ENCODE measurements at regions of chr9 and their contacts with region 1.

Region 1: DNA sequence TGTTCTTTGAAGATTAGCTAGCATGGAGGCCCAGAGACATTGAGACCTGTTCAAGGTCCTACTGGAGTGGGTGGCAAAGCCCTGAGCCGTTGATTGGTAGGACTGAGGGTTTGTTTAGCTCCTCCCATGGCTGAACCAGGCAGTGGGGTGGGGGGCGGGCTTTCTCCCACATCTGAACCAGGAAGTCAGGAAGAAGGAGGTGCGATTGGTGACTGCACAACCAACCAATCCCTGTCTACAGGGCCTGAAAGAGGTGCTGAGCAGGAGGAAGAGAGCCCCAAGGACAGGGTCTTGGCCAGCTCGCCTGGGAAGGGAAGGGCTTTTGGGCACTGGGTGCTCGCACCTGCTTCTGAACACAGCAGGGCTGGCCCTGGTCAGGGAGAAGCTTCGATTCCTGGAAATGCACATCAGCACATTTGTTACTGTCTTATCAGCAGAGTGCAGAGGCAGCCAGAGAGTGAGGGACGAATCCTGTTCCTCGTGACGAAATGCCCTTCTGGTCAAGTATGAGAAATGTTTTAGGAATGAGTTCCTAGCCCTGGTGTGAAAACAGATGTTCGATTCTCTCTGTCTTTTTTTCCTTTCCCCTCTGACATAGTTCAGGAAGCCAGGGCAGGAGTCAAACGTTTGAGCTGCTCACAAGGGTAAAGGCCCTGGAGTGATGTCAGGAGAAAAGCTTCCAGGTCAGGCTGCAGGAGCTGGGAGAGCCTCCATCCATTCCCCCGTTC is 294.8 kb upstream of the KLF4 start:
- DNase-seq: no peak
- ATAC-seq: no peak
- H3K4me3 ChIP-seq: no peak overlapping the region
- H3K27ac ChIP-seq: no peak overlapping the region
- H3K4me1 ChIP-seq: no peaks in the 10 kb centered on the region
- H3K27me3 ChIP-seq: no peaks in the 10 kb centered on the region
- CTCF ChIP-seq: no peak

Region 2: GRCh38 chr9:107805159-107805558 is 20.8 kb after region 1 on chr9:
- CTCF ChIA-PET with region 1: no interaction called
- POLR2A ChIA-PET with region 1: no interaction called
- intact Hi-C with region 1: no loop called
- DNase-seq: no peak
- ATAC-seq: no peak
- H3K4me3 ChIP-seq: no peak overlapping the region
- H3K27ac ChIP-seq: no peak overlapping the region
- H3K4me1 ChIP-seq: peaks cover 15% of the 10 kb centered on the region; the same call in 1 of the 2 replicates
- H3K27me3 ChIP-seq: no peaks in the 10 kb centered on the region
- CTCF ChIP-seq: no peak

Region 3: DNA sequence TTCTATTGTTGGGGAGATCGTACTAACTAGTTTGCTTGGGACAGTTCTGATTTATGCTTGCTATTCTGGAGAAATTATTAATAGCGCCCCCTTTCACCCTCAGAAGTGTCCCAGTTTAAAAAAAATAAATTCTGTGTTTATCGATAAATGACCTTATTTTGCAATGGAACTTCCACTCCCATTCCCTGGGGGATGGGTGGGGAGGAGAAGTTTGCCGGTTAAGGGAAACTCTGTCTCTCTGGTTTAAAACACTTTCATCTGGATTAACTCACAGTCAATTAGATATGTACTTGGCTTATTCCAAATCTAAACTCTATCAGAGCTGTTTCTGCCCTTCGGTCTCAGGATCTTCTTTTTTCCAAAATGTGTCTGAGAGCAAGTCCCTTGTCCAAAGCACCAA is 39.5 kb after region 1 on chr9:
- CTCF ChIA-PET with region 1: interaction called, 10 read pairs
- POLR2A ChIA-PET with region 1: no interaction called
- intact Hi-C with region 1: no loop called
- DNase-seq: no peak
- ATAC-seq: no peak
- H3K4me3 ChIP-seq: no peak overlapping the region
- H3K27ac ChIP-seq: no peak overlapping the region
- H3K4me1 ChIP-seq: no peaks in the 10 kb centered on the region
- H3K27me3 ChIP-seq: no peaks in the 10 kb centered on the region
- CTCF ChIP-seq: no peak

Measured in PC-3 (cell line).